ENCODE measurements at regions of chr12 and their contacts with region 1.

Region 1: DNA sequence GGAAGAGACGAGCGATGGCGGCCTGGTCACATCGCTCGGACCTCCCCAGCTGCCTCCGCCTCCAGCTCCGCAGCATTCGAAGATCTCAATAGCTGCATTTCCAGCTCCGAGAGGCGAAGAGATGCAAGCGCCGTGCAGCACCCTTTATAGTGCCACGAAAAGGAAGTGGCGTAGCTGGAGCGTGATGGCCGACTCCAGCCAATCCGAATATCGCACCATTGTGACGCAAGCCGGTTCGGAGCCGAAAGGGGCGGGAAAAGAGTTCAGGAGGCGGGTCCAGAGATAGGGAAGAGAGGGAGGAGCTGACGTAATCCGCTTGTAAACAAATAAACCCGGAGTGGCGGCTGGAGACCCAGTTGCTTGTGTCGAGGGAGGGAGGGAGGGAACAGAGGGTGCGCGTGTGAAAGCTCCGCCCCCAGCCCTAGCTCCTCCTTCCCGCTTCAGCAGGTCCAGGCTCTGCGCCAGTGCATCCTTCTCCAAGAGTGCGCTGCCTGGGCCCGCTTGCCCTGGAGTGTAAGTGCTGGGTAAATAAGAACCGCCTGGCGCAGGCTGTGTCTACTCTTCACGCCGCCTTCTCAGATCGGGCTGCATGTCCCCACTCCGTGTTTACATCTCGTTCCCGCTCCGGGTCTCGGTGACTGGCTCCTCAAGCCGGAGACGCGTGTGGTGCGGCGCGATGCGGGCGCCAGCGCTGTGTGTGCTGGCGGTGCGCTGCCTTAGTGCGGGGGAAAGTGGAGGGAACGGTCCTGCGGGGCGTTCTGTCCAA is at the start of gene BTG1:
- DNase-seq: peak; percentile 100
- H3K4me3 ChIP-seq: peak within 1 kb of the TSS; percentile 53 to 86 (median 85)
- H3K27ac ChIP-seq: peak within 1 kb of the TSS; percentile 80
- H3K4me1 ChIP-seq: peaks cover 19% of the 10 kb centered on the region
- H3K27me3 ChIP-seq: no peaks in the 10 kb centered on the region
- CTCF ChIP-seq: peak in 1 of 2 donors; percentile 1
- POLR2A ChIP-seq: peak; percentile 100
- total RNA-seq, gene BTG1: 89.5 and 104 TPM in 2 replicates

Region 2: DNA sequence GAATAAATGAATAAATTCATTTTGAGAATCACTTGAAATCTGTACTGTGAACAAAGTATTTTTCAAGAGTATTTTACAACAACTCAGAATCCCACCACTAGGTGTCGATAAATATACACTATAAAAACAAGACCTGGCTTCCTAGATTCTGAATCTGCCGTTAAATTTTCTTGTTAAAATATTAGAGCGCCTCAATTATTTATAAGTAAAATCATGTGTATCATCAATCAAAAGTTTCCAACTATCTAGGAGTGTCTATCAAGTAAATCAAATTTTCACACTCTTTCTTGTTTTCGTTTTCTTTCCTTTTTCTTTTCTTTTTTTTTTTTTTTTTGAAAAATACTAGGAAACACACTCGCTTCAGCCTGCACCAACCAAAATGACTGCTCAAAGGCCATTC is 784.0 kb before region 1 on chr12:
- CTCF ChIA-PET with region 1: no interaction called
- POLR2A ChIA-PET with region 1: no interaction called
- dilution Hi-C with region 1: no loop called
- intact Hi-C with region 1: no loop called
- DNase-seq: peak; percentile 68
- H3K4me3 ChIP-seq: no peak overlapping the region
- H3K27ac ChIP-seq: no peak overlapping the region
- H3K4me1 ChIP-seq: no peaks in the 10 kb centered on the region
- H3K27me3 ChIP-seq: no peaks in the 10 kb centered on the region
- CTCF ChIP-seq: peak; percentile 33 to 39
- POLR2A ChIP-seq: no peak

Region 3: DNA sequence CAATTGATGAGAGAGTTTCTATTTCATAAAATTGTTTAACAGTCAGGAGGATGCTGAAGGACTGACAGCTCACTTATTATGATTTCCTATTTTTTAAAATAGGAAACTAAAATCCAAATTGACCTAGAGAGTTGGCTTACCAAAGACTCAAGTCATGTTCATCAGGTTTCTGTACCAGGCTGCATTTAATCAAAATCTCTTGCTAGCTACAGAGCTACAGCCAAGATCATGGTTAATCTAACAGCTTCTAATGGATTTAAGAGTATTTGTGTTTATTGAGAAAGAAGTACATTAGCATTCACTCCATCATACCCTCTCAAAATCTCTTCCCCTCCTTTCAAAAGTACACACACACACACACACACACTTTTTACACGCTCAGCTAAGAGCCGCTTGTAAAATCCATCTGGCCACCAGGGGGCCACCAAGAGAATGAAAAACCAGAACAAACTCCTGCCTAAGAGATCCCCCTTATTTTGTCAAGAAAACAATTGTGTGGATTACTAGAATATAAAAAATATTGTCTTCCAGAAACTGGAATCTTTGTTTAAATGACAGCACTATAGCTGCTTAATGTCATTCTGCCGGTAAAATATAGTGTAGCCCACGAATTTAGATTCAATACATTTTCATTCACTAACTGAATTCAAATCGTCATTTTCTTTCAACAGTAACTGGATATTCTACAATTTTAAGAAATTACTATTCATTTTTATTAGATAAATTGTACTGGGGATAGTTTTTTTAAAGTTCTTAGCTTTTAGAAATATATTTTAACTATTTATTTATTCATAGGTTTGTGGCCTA is 334.2 kb before region 1 on chr12:
- CTCF ChIA-PET with region 1: interaction called, 111 read pairs
- POLR2A ChIA-PET with region 1: interaction called, 14 read pairs
- dilution Hi-C with region 1: no loop called
- intact Hi-C with region 1: loop called (anchors 1 kb)
- DNase-seq: peak; percentile 79
- H3K4me3 ChIP-seq: no peak overlapping the region
- H3K27ac ChIP-seq: no peak overlapping the region
- H3K4me1 ChIP-seq: no peaks in the 10 kb centered on the region
- H3K27me3 ChIP-seq: no peaks in the 10 kb centered on the region
- CTCF ChIP-seq: peak; percentile 60 to 72
- POLR2A ChIP-seq: no peak

Region 4: GRCh38 chr12:91991399-91992187 is 154.3 kb before region 1 on chr12:
- CTCF ChIA-PET with region 1: interaction called, 7 read pairs
- POLR2A ChIA-PET with region 1: interaction called, 19 read pairs
- dilution Hi-C with region 1: no loop called
- intact Hi-C with region 1: loop called (anchors 1 kb)
- DNase-seq: peak; percentile 55
- H3K4me3 ChIP-seq: no peak overlapping the region
- H3K27ac ChIP-seq: peak overlapping the region; percentile 94
- H3K4me1 ChIP-seq: peaks cover 69% of the 10 kb centered on the region
- H3K27me3 ChIP-seq: no peaks in the 10 kb centered on the region
- CTCF ChIP-seq: no peak
- POLR2A ChIP-seq: no peak

Region 5: GRCh38 chr12:92218394-92219077 is 72.6 kb after region 1 on chr12:
- CTCF ChIA-PET with region 1: interaction called, 3 read pairs
- POLR2A ChIA-PET with region 1: interaction called, 12 read pairs
- dilution Hi-C with region 1: no loop called
- intact Hi-C with region 1: loop called (anchors 1 kb)
- DNase-seq: no peak
- H3K4me3 ChIP-seq: no peak overlapping the region
- H3K27ac ChIP-seq: no peak overlapping the region
- H3K4me1 ChIP-seq: peaks cover 9% of the 10 kb centered on the region
- H3K27me3 ChIP-seq: no peaks in the 10 kb centered on the region
- CTCF ChIP-seq: no peak
- POLR2A ChIP-seq: no peak

Region 6: GRCh38 chr12:92539113-92539749 is 393.3 kb after region 1 on chr12:
- CTCF ChIA-PET with region 1: interaction called, 3 read pairs
- POLR2A ChIA-PET with region 1: interaction called, 4 read pairs
- dilution Hi-C with region 1: no loop called
- intact Hi-C with region 1: loop called (anchors 1 kb)
- DNase-seq: peak; percentile 95
- H3K4me3 ChIP-seq: no peak overlapping the region
- H3K27ac ChIP-seq: peak overlapping the region; percentile 70
- H3K4me1 ChIP-seq: peaks cover 32% of the 10 kb centered on the region
- H3K27me3 ChIP-seq: no peaks in the 10 kb centered on the region
- CTCF ChIP-seq: no peak
- POLR2A ChIP-seq: no peak

Region 7: GRCh38 chr12:92649511-92650227 is 503.8 kb after region 1 on chr12:
- CTCF ChIA-PET with region 1: interaction called, 3 read pairs
- POLR2A ChIA-PET with region 1: no interaction called
- dilution Hi-C with region 1: no loop called
- intact Hi-C with region 1: loop called (anchors 1 kb)
- DNase-seq: peak; percentile 75
- H3K4me3 ChIP-seq: no peak overlapping the region
- H3K27ac ChIP-seq: no peak overlapping the region
- H3K4me1 ChIP-seq: no peaks in the 10 kb centered on the region
- H3K27me3 ChIP-seq: no peaks in the 10 kb centered on the region
- CTCF ChIP-seq: peak; percentile 69 to 70
- POLR2A ChIP-seq: no peak

Measured in endothelial cell of umbilical vein (primary cell).